Left cardiac atrium (tissue), 4 donors: ENCODE measurements at regions of chr11 and their contacts with region 1.

Region 1: DNA sequence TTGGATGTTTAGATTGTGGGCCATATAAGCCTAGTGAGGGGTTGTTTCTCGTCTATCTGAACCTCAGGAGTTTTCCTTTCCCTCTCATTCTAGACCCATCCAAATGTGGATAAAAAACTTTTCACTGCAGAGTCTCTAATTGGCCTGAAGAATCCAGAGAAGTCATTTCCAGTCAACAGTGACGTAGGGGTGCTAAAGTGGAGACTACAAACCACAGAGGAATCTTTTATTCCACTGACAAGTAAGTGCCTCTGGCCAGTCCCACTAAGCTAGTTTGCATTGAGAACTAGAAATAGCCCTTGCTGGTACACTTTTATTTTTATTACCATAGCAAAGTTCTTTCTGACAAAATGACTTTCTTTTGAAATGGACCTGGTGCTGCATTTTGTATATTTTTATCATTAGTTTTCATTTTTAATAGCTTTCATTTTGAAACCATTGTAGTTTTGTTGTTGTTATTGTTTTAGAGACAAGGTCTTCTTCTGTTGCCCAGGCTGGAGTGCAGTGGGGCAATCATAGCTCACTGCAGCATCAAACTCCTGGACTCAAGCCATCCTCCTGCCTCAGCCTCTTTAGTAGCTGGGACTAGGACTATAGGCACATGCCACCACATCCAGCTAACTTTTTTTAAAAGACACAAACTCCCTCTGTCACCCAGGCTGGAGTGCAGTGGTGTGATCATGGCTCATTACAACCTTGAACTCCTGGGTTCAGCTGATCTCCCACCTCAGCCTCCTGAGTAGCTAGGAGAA is 14.6 kb upstream of the PHLDB1 start:
- DNase-seq: no peak
- ATAC-seq: peak; percentile 47 to 69

Region 2: GRCh38 chr11:118659314-118659952 is 66.6 kb after region 1 on chr11:
- intact Hi-C with region 1: loop called in 1 of 2 experiments (anchors 10 kb)
- DNase-seq: peak; percentile 93
- ATAC-seq: peak; percentile 76 to 85

Region 3: DNA sequence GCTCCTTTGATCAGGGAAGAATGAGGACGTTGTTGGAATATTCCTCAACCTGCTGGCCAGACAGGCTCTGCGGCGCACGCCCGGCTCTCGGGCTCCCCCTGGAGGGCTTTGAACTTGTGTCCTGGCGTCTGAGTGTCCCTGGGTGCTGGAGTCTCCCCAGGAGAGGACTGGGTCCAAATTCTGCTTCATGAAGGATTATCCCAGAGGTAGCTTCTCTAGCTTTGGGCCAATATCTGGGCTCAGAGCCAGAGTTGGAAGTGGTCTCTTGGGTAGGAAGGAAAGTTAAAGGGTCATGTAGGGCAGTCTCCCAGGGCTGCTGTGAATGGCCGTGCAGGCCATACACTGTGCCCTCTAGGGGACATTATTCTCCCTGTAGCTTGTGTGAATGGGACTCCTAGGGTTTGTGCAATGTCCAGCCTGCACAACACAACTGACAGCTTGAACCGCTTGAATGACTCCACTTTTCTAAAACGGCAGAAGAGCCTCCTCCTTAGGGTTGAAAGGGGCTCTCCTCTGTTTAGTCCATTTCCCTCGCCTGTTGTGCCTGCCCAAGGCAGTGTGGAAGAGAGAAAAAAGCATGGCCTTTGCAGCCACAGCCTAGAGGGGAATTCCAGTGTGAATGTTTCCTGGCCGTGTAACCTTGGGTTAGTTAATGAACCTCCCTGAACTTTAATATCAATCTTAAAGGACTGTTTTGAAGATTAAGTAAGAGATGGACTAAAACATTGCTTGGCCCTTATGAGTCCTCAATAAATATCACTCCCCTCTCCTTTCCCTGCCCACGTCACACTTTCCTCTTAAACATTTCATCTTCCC is 941.3 kb after region 1 on chr11:
- intact Hi-C with region 1: no loop called
- DNase-seq: peak; percentile 76
- ATAC-seq: peak; percentile 82 to 91